ENCODE measurements at regions of chr5 and their contacts with region 1.

Region 1: DNA sequence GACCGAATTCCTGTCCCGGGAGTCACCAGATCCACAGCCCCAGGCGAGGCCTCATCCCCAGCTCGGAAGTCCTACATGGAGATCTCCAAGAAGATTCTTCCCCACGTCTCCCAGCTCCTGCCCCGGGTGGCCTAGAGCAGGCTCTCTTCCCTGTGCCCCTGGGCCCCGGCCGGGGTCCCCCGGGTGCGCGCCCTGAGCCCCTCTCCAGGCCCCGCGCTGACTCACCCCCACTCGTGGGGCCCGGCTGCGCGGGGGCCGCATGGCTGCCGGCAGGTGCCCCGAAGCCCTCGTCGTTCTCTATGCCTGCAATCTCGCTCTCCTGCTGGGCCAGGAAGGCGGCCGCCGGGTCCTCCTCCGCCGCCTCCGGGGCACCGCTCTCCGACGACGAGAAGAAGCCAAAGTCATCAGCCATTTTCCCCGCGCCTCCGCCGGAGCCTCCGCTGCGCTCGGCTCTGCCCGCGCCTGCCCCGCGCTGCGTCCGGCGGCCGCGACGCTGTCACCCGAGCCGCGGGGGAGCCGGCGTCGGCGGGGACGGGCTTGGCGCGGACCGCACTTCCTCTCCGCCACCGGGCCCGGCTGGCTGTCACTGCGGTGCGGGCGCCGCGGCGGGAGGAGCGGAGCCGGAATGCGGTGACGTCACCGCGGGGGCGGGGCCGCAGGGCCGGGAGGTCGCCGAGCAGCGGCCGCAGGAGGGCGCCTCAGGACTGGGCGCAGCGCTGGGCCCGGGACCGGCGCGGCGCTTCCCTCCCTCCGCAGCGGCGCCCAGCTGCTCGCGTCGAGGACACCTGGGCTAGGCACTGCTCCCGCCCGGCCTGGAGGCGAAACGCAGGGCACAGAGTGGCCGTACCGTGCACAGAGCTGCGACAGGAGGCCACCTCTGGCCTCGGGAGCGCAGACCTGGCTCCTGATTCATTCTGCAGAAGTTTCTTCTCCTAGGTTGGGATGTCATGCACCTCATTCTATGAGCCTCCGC is at the start of gene CLTB:
- DNase-seq: peak; percentile 88 to 95
- ATAC-seq: peak; percentile 93 to 98 (median 95)
- H3K4me3 ChIP-seq: peak within 1 kb of the TSS; percentile 80 to 100 (median 98)
- H3K27ac ChIP-seq: peak within 1 kb of the TSS; percentile 89 to 99 (median 97)
- H3K4me1 ChIP-seq: peaks cover 28 to 55% (median 48%) of the 10 kb centered on the region in 9 donors
- H3K27me3 ChIP-seq: no peaks in the 10 kb centered on the region
- CTCF ChIP-seq: peak; percentile 53 to 91 (median 79)
- total RNA-seq, gene CLTB: 192 to 246 (median 214) TPM

Region 2: GRCh38 chr5:176144508-176144907 is 271.7 kb before region 1 on chr5:
- intact Hi-C with region 1: no loop called
- DNase-seq: no peak
- ATAC-seq: peak in 1 of 8 donors; percentile 17
- H3K4me3 ChIP-seq: no peak overlapping the region
- H3K27ac ChIP-seq: no peak overlapping the region
- H3K4me1 ChIP-seq: no peaks in the 10 kb centered on the region
- H3K27me3 ChIP-seq: peaks cover 0 to 52% (median 39%) of the 10 kb centered on the region in 7 donors
- CTCF ChIP-seq: no peak

Region 3: DNA sequence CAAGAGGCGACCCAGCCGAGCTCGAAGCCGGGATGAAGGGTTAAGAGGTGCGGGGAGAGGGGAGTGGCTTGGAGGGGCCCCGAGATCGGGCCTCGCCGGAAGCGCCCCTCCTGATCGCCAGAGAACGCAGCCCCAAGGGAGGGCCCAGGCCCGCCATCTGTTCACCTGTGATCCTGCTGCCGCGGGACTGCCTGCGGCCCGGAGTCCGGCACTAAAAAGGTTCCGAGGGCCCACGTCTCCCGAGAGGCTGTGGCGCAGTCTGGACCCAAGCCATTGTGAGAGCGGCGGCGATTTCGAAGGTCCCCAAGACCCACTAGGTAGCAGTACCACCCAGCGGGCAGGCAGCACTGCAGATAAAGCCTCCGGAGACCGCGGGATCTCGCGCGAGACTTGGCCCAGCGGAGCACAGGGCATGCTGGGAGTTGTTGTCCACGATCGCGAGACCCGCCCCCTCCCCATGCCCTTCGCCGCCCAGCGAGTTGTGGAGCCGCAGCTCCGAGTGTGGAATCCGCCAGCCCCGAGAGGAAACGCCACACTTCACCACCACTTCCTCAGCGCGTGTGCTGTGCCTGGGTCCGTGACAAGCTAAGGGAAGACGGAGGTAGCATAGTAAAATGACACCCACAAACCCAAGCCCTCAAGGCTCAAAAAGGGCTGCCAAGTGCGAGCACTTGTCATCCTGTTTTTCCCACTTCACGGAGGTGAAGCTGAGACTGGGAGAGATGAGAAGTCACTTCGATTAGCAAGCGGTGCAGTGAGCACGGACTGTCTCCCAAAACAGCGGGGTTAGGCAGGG is 54.6 kb before region 1 on chr5 and contains the start of gene KIAA1191:
- intact Hi-C with region 1: loop called in 1 of 10 experiments (anchors 5 kb)
- DNase-seq: peak; percentile 96 to 97
- ATAC-seq: peak; percentile 94 to 98 (median 98)
- H3K4me3 ChIP-seq: peak within 1 kb of the TSS; percentile 58 to 100 (median 95)
- H3K27ac ChIP-seq: peak within 1 kb of the TSS in 9 of 10 donors; percentile 60 to 94 (median 86)
- H3K4me1 ChIP-seq: peaks cover 0 to 39% (median 28%) of the 10 kb centered on the region in 9 donors
- H3K27me3 ChIP-seq: peaks cover 0 to 21% (median 0%) of the 10 kb centered on the region in 7 donors
- CTCF ChIP-seq: peak in 6 of 9 donors; percentile 8 to 58 (median 40)
- total RNA-seq, gene KIAA1191: 74.9 to 121 (median 91.9) TPM

Region 4: GRCh38 chr5:176447982-176448608 is 31.9 kb after region 1 on chr5 and contains the start of gene FAF2:
- intact Hi-C with region 1: loop called in 4 of 10 experiments (anchors 1 to 2 kb)
- DNase-seq: peak; percentile 95 to 96
- ATAC-seq: peak; percentile 98 to 100 (median 99)
- H3K4me3 ChIP-seq: peak within 1 kb of the TSS; percentile 70 to 96 (median 90)
- H3K27ac ChIP-seq: peak within 1 kb of the TSS; percentile 76 to 98 (median 95)
- H3K4me1 ChIP-seq: peaks cover 7 to 44% (median 33%) of the 10 kb centered on the region in 9 donors
- H3K27me3 ChIP-seq: no peaks in the 10 kb centered on the region
- CTCF ChIP-seq: peak; percentile 97 to 100 (median 99)
- total RNA-seq, gene FAF2: 12.8 to 19.9 (median 14.9) TPM

Region 5: GRCh38 chr5:176543428-176544173 is 127.4 kb after region 1 on chr5:
- intact Hi-C with region 1: loop called in 7 of 10 experiments (anchors 1 to 10 kb)
- DNase-seq: peak; percentile 71 to 82
- ATAC-seq: peak; percentile 83 to 94 (median 89)
- H3K4me3 ChIP-seq: peak overlapping the region; percentile 55 to 85 (median 71)
- H3K27ac ChIP-seq: peak overlapping the region; percentile 73 to 94 (median 90)
- H3K4me1 ChIP-seq: peaks cover 0 to 55% (median 30%) of the 10 kb centered on the region in 9 donors
- H3K27me3 ChIP-seq: no peaks in the 10 kb centered on the region
- CTCF ChIP-seq: no peak

Region 6: GRCh38 chr5:176596689-176597416 is 180.6 kb after region 1 on chr5:
- intact Hi-C with region 1: loop called in 1 of 10 experiments (anchors 10 kb)
- DNase-seq: peak in 1 of 2 donors; percentile 38
- ATAC-seq: peak; percentile 62 to 78 (median 68)
- H3K4me3 ChIP-seq: peak overlapping the region in 9 of 10 donors; percentile 24 to 49 (median 35)
- H3K27ac ChIP-seq: no peak overlapping the region
- H3K4me1 ChIP-seq: peaks cover 0 to 4% (median 0%) of the 10 kb centered on the region in 9 donors
- H3K27me3 ChIP-seq: peaks cover 0 to 34% (median 8%) of the 10 kb centered on the region in 7 donors
- CTCF ChIP-seq: peak in 6 of 9 donors; percentile 8 to 48 (median 32)